Dorsolateral prefrontal cortex (tissue), 120 donors: ENCODE measurements at regions of chr9 and their contacts with region 1.

Region 1: DNA sequence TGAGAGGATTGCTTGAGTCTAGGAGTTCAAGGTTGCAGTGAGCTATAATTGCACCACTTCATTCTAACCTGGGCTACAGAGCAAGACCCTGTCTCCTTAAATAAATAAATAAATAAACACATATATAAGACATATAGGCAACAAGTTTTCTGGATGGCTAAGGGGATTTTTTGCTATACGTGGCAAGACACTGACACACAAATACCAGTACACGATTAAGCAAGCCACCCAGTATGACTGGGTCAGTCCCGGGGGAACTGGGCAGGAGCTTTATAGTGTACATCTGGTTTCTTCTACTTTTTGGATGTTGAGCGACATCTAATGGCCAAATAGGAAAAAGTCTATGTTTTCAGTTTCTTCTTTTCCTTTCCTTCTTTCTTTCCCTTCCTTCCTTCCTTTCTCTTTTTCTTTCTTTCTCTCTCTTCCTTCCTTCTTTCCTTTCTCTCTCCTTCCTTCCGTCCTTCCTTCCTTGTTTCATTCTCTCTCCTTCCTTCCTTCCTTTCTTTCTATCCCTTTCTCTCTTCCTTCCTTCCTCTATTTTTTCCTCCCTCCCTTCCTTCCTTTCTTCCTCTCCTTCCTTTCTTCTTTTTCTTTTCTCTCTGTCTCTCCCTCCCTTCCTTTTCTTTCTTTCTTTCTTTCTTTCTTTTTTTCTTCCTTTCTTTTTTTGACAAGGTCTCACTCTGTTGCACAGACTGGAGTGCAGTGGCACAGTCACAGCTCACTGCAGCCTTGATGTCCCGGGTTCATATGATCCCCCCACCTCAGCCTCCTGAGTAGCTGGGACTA is 47.0 kb upstream of the PLIN2 start:
- DNase-seq: peak in 1 of 10 donors; percentile 18
- H3K4me3 ChIP-seq: peak overlapping the region in 15 of 59 donors; percentile 5 to 32 (median 18)
- H3K27ac ChIP-seq: no peak overlapping the region
- H3K27me3 ChIP-seq: no peaks in the 10 kb centered on the region
- CTCF ChIP-seq: peak in 54 of 56 donors; percentile 23 to 83 (median 62)

Region 2: GRCh38 chr9:18747595-18747994 is 426.7 kb before region 1 on chr9:
- intact Hi-C with region 1: no loop called
- DNase-seq: peak in 2 of 10 donors; percentile 5 to 12
- H3K4me3 ChIP-seq: no peak overlapping the region
- H3K27ac ChIP-seq: peak overlapping the region in 1 of 59 donors; percentile 13
- H3K27me3 ChIP-seq: no peaks in the 10 kb centered on the region
- CTCF ChIP-seq: no peak

Region 3: GRCh38 chr9:19127881-19128500 is 46.3 kb before region 1 on chr9:
- intact Hi-C with region 1: loop called in 1 of 2 experiments (anchors 5 kb)
- DNase-seq: no peak
- H3K4me3 ChIP-seq: peak overlapping the region; percentile 44 to 85 (median 72)
- H3K27ac ChIP-seq: peak overlapping the region; percentile 52 to 97 (median 90)
- H3K27me3 ChIP-seq: peaks cover 0 to 9% (median 0%) of the 10 kb centered on the region in 45 donors
- CTCF ChIP-seq: peak in 1 of 56 donors; percentile 3

Region 4: GRCh38 chr9:19223724-19224123 is 49.4 kb after region 1 on chr9:
- intact Hi-C with region 1: no loop called
- DNase-seq: no peak
- H3K4me3 ChIP-seq: no peak overlapping the region
- H3K27ac ChIP-seq: no peak overlapping the region
- H3K27me3 ChIP-seq: no peaks in the 10 kb centered on the region
- CTCF ChIP-seq: no peak

Region 5: DNA sequence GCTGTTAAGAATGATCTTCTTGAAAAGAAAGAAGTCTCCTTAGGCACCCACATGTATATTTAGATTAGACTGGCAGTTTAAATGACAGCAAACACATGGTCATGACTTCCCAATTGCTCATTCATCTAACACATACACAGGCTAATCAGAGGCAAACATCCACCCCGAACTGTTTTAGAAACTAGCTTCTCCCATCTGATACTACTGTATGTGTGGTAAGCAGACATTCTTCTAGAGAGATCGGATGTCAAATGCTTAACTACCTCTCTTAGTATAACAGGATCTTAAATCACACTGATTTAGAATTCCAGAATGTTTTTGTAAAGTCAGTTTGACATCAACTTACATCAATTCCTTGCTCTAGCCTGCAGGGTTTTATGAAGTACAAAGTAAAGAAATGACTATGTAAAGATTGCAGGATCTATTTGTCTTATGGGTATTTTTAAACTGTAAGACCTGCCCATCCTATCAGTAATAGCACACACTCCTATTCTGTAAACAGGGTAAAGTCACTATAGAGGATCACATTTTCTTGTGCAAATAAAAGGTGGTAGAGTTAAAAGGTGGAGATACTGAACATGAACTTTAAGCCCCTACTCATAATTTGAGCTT is 1208.2 kb after region 1 on chr9:
- intact Hi-C with region 1: no loop called
- DNase-seq: no peak
- H3K4me3 ChIP-seq: no peak overlapping the region
- H3K27ac ChIP-seq: no peak overlapping the region
- H3K27me3 ChIP-seq: no peaks in the 10 kb centered on the region
- CTCF ChIP-seq: no peak